ENCODE measurements at regions of chr22 and their contacts with region 1.

Region 1: DNA sequence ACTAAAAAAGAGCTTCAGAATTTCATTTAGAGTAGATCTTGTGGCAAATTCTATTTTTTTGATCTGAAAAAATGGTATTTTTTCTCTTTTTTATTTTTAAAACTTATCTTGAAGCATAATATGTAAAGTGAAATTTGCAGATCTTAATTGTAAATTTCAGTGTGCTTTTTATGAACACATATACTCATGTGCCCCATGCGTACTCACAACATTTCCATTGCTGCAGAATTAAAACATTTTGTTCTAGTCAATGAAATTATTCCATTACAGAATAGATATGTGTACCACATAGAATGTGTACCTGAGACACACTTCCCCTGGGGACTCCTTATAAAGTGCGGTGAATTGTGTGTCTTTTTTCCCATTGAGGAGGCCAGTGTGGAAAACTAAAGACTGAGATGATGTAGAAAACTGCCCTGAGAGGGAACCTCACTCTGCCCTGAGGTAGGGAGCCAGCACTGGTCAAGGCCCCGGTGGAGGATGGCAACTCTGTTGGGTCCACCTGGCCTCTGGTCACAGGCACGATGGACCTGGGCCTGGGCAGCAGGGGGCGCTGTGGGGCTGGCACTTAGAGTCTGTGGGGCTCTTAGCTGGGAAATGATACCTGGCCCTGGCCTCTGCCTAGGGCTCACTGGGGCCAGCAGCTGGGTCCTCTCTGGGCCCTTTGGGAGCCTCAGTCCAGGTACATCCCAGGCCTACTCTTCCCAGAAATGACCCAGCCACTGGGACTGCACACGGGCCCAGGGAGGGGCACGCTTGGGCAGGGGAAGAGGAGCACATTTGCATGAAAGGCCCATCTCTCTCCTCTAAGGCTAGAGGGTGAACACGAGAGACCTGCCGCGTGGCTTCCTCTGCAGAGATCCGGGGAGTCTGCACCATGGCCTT is 77.9 kb upstream of the TOP3B start:
- DNase-seq: peak; percentile 39
- H3K4me3 Mint-ChIP-seq: no peak overlapping the region
- H3K27ac Mint-ChIP-seq: no peak overlapping the region
- H3K4me1 Mint-ChIP-seq: peaks cover 2% of the 10 kb centered on the region
- H3K27me3 Mint-ChIP-seq: peaks cover 15% of the 10 kb centered on the region

Region 2: GRCh38 chr22:22130953-22131608 is 70.6 kb after region 1 on chr22:
- intact Hi-C with region 1: loop called (anchors 10 kb)
- DNase-seq: no peak
- H3K4me3 Mint-ChIP-seq: no peak overlapping the region
- H3K27ac Mint-ChIP-seq: no peak overlapping the region
- H3K4me1 Mint-ChIP-seq: peaks cover 10% of the 10 kb centered on the region
- H3K27me3 Mint-ChIP-seq: peaks cover 4% of the 10 kb centered on the region

Region 3: GRCh38 chr22:22156716-22157347 is 96.4 kb after region 1 on chr22:
- intact Hi-C with region 1: loop called (anchors 5 kb)
- DNase-seq: peak; percentile 49
- H3K4me3 Mint-ChIP-seq: no peak overlapping the region
- H3K27ac Mint-ChIP-seq: peak overlapping the region; percentile 8
- H3K4me1 Mint-ChIP-seq: peaks cover 4% of the 10 kb centered on the region
- H3K27me3 Mint-ChIP-seq: peaks cover 9% of the 10 kb centered on the region